Calu3 (cell line): ENCODE measurements at regions of chr5 and their contacts with region 1.

Region 1: DNA sequence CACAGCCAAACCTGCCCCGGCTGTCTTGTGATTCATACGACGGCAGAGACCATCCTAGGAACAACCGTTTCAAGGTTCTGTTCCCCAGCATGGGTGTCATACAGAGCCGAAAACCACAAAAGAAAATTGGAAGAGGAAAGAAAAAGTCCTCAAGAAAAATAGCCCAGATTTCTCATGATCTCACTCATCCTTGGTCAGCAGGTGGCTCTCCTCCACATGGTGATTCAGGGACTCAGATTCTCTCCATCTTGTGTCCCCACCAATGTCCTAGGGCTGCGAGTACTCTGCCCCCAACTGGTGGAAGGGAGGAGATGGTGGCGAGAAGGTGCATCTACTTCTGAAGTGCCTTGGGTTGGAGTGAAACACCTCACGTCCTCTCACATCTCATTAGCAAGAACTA is 25.6 kb downstream of the PDZD2 start:
- DNase-seq: peak; percentile 25
- H3K4me3 Mint-ChIP-seq: no peak overlapping the region
- H3K27ac Mint-ChIP-seq: no peak overlapping the region
- H3K4me1 Mint-ChIP-seq: no peaks in the 10 kb centered on the region
- H3K27me3 Mint-ChIP-seq: peaks cover 23% of the 10 kb centered on the region
- CTCF ChIP-seq: no peak

Region 2: DNA sequence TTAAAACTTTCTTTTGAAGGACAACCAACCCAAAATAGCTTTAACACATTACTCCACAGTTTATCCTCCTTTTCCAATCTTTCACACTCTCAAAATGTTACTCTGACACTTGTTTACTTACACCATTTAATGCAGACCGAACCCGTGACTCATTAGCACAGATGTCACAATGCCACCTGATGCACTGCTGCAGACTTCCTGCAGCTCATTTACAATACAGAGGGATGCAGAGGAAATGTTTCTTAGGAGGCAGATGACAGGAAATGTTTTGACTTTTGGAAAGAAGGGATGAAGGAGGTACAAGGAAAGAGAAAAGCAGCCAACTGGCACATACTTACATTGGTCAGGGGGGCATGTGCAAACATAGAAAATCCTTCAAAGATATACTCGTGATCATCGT is 171.7 kb before region 1 on chr5:
- CTCF ChIA-PET with region 1: no interaction called
- intact Hi-C with region 1: no loop called
- DNase-seq: no peak
- H3K4me3 Mint-ChIP-seq: no peak overlapping the region
- H3K27ac Mint-ChIP-seq: no peak overlapping the region
- H3K4me1 Mint-ChIP-seq: no peaks in the 10 kb centered on the region
- H3K27me3 Mint-ChIP-seq: no peaks in the 10 kb centered on the region
- CTCF ChIP-seq: no peak

Region 3: GRCh38 chr5:31680528-31680927 is 16.0 kb after region 1 on chr5:
- CTCF ChIA-PET with region 1: interaction called, 10 read pairs
- intact Hi-C with region 1: no loop called
- DNase-seq: no peak
- H3K4me3 Mint-ChIP-seq: no peak overlapping the region
- H3K27ac Mint-ChIP-seq: no peak overlapping the region
- H3K4me1 Mint-ChIP-seq: no peaks in the 10 kb centered on the region
- H3K27me3 Mint-ChIP-seq: peaks cover 48% of the 10 kb centered on the region
- CTCF ChIP-seq: no peak

Region 4: DNA sequence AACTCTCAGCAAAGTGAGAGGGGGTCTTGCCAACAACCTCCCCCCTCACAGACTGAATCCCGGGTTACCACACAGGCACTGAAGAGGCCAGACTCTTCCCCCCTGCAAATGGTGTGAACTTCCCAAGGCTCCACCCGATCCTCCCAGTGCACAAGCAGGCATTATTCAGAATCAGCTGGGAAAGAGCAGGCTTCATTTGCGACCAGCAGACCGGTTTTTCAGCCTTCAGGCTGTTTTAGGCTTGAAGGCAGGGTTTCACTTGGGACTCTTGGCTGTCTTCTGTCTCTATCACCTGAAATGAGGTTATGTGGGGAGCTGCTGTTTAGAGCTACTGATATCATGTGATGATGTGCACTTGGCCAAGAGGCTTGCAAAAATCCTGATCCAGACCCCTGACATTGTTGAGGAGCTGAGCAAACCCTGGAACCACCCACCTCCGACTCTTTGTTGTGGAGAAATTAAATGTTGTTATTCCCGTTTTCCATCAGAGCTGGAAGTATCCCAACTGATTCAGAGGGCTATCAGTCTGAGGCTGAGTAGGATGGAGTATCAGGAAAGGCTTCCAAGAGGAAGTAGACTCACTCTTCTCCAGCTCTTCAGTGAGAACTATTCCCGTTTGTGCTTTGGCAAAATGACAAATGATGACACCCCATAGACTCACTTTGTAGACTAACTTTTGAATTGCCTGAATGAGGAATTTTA is 843.3 kb after region 1 on chr5:
- CTCF ChIA-PET with region 1: no interaction called
- intact Hi-C with region 1: no loop called
- DNase-seq: no peak
- H3K4me3 Mint-ChIP-seq: no peak overlapping the region
- H3K27ac Mint-ChIP-seq: no peak overlapping the region
- H3K4me1 Mint-ChIP-seq: no peaks in the 10 kb centered on the region
- H3K27me3 Mint-ChIP-seq: peaks cover 71% of the 10 kb centered on the region
- CTCF ChIP-seq: no peak